Heart right ventricle (tissue), 16 donors: ENCODE measurements at regions of chr1 and their contacts with region 1.

Region 1: DNA sequence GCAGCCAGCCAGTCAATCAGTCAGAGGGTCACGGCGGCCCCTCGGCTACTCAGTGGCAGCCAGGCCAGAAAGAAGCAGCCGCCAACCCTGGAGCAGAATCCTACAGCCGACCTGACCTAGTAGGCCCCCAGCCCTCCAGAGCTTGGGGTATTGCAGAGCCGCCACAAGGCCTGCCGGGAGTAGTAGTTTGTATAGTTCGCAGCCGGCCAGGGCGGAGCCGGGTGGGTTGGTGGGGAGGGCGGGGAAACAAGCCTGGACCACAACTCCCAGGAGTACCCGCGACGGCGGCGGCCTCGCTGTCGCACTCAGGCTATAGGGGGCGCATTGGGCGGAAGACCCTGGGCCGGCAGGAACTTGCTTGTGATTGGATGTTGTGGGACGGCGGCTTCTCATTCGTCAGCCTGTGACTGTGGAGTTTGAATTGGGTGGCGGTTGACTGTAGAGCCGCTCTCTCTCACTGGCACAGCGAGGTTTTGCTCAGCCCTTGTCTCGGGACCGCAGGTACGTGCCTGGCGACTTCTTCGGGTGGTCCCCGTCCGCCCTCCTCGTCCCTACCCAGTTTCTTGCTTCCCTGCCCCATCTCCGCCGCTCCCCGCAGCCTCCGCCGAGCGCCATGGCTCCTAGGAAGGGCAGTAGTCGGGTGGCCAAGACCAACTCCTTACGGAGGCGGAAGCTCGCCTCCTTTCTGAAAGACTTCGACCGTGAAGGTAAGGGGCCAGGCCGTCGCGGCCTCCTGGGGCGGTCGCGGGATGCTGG is at the start of gene CDCA8:
- DNase-seq: peak; percentile 98
- ATAC-seq: peak; percentile 94 to 98 (median 95)
- H3K4me3 ChIP-seq: peak within 1 kb of the TSS; percentile 67 to 98 (median 87)
- H3K27ac ChIP-seq: peak within 1 kb of the TSS; percentile 60 to 90 (median 78)
- H3K4me1 ChIP-seq: peaks cover 10 to 36% (median 29%) of the 10 kb centered on the region in 9 donors
- H3K27me3 ChIP-seq: no peaks in the 10 kb centered on the region
- CTCF ChIP-seq: peak; percentile 25 to 90 (median 70)
- total RNA-seq, gene CDCA8: 0.09 to 2.9 (median 0.42) TPM in 9 of 10 donors, not detected in the other

Region 2: GRCh38 chr1:37474046-37474759 is 218.1 kb before region 1 on chr1 and contains the start of gene ZC3H12A:
- intact Hi-C with region 1: loop called in 2 of 10 experiments (anchors 5 kb)
- DNase-seq: peak; percentile 85 to 91
- ATAC-seq: peak; percentile 78 to 94 (median 88)
- H3K4me3 ChIP-seq: peak within 1 kb of the TSS; percentile 59 to 98 (median 92)
- H3K27ac ChIP-seq: peak within 1 kb of the TSS; percentile 62 to 98 (median 94)
- H3K4me1 ChIP-seq: peaks cover 23 to 80% (median 74%) of the 10 kb centered on the region in 9 donors
- H3K27me3 ChIP-seq: no peaks in the 10 kb centered on the region
- CTCF ChIP-seq: no peak
- total RNA-seq, gene ZC3H12A: 2.9 to 10.9 (median 4.9) TPM

Region 3: GRCh38 chr1:37595440-37596319 is 96.6 kb before region 1 on chr1 and contains the start of gene GNL2:
- intact Hi-C with region 1: loop called in 2 of 10 experiments (anchors 2 to 5 kb)
- DNase-seq: peak; percentile 97 to 99
- ATAC-seq: peak; percentile 100
- H3K4me3 ChIP-seq: peak within 1 kb of the TSS; percentile 59 to 78 (median 70)
- H3K27ac ChIP-seq: peak within 1 kb of the TSS; percentile 2 to 85 (median 76)
- H3K4me1 ChIP-seq: peaks cover 6 to 28% (median 20%) of the 10 kb centered on the region in 9 donors
- H3K27me3 ChIP-seq: no peaks in the 10 kb centered on the region
- CTCF ChIP-seq: peak in 2 of 9 donors; percentile 6 to 11
- total RNA-seq, gene GNL2: 20.2 to 35.4 (median 22.3) TPM

Region 4: GRCh38 chr1:37650173-37650572 is 42.1 kb before region 1 on chr1:
- intact Hi-C with region 1: no loop called
- DNase-seq: no peak
- ATAC-seq: no peak
- H3K4me3 ChIP-seq: no peak overlapping the region
- H3K27ac ChIP-seq: no peak overlapping the region
- H3K4me1 ChIP-seq: no peaks in the 10 kb centered on the region
- H3K27me3 ChIP-seq: peaks cover 0 to 39% (median 14%) of the 10 kb centered on the region in 7 donors
- CTCF ChIP-seq: no peak

Region 5: GRCh38 chr1:37726751-37727585 is 34.7 kb after region 1 on chr1:
- intact Hi-C with region 1: no loop called
- DNase-seq: no peak
- ATAC-seq: no peak
- H3K4me3 ChIP-seq: no peak overlapping the region
- H3K27ac ChIP-seq: no peak overlapping the region
- H3K4me1 ChIP-seq: peaks cover 0 to 10% (median 0%) of the 10 kb centered on the region in 9 donors
- H3K27me3 ChIP-seq: peaks cover 0 to 67% (median 32%) of the 10 kb centered on the region in 7 donors
- CTCF ChIP-seq: no peak

Region 6: GRCh38 chr1:37859507-37860345 is 167.5 kb after region 1 on chr1 and contains the start of gene MTF1:
- intact Hi-C with region 1: loop called in 3 of 10 experiments (anchors 5 to 10 kb)
- DNase-seq: peak; percentile 97 to 98
- ATAC-seq: peak; percentile 99 to 100 (median 99)
- H3K4me3 ChIP-seq: peak within 1 kb of the TSS; percentile 72 to 97 (median 86)
- H3K27ac ChIP-seq: peak within 1 kb of the TSS; percentile 75 to 98 (median 94)
- H3K4me1 ChIP-seq: peaks cover 0 to 51% (median 42%) of the 10 kb centered on the region in 9 donors
- H3K27me3 ChIP-seq: no peaks in the 10 kb centered on the region
- CTCF ChIP-seq: peak; percentile 89 to 96 (median 93)
- total RNA-seq, gene MTF1: 10.0 to 17.1 (median 11.0) TPM